ENCODE measurements at regions of chr5 and their contacts with region 1.

Region 1: DNA sequence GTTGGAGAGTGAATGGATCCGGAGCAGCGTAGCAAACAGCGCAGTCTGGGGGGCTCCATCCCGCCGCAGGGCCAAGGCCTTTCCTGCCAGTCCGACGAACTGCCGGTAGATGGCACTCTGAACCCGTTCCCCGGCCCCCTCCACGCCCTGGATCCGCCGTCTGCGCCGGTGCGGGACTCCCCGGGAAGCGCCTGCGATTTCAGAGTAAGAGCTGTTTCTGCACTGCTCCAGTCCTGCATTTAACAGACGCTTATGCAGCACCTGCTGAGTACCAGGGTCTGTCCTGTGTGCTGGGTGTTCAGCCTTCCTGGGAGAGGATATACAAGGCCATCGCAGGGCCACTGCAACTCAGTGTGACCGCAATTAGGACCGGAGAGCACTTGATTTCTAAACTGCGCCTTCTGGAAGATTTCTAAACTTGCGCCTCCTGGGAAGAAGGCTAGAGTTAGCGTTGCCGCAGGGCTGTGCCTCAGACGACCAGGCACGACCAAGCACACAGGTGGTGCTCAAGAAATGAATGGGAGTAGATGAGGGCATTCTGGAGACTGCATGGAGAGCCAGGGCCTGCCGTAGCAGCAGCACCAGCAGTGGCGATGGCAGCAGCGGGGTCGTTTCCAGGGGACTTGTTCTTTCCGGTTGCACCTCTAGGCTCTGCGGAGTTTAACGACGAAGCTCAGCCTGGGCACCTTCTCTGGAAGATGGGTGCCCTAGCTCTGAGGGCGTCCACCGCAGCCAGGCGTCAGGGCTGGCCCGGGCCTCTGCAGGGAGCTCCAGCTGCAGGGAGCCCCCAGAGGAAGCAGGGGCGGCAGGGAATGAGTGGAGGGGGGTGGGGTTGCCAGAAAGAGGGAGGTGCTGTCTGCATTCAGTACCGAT is 14.3 kb upstream of the TIFAB start:
- DNase-seq: peak; percentile 81
- ATAC-seq: peak; percentile 89
- H3K4me3 Mint-ChIP-seq: peak overlapping the region; percentile 39
- H3K27ac Mint-ChIP-seq: no peak overlapping the region
- H3K4me1 Mint-ChIP-seq: peaks cover 9% of the 10 kb centered on the region
- H3K27me3 Mint-ChIP-seq: peaks cover 32% of the 10 kb centered on the region
- CTCF ChIP-seq: peak; percentile 86

Region 2: GRCh38 chr5:135448791-135449507 is 17.5 kb before region 1 on chr5:
- CTCF ChIA-PET with region 1: interaction called, 42 read pairs
- POLR2A ChIA-PET with region 1: no interaction called
- intact Hi-C with region 1: no loop called
- DNase-seq: no peak
- ATAC-seq: no peak
- H3K4me3 Mint-ChIP-seq: no peak overlapping the region
- H3K27ac Mint-ChIP-seq: no peak overlapping the region
- H3K4me1 Mint-ChIP-seq: no peaks in the 10 kb centered on the region
- H3K27me3 Mint-ChIP-seq: no peaks in the 10 kb centered on the region
- CTCF ChIP-seq: no peak

Region 3: GRCh38 chr5:135488727-135489465 is 22.5 kb after region 1 on chr5:
- CTCF ChIA-PET with region 1: interaction called, 21 read pairs
- POLR2A ChIA-PET with region 1: no interaction called
- intact Hi-C with region 1: no loop called
- DNase-seq: no peak
- ATAC-seq: no peak
- H3K4me3 Mint-ChIP-seq: no peak overlapping the region
- H3K27ac Mint-ChIP-seq: no peak overlapping the region
- H3K4me1 Mint-ChIP-seq: peaks cover 7% of the 10 kb centered on the region
- H3K27me3 Mint-ChIP-seq: peaks cover 61% of the 10 kb centered on the region
- CTCF ChIP-seq: no peak

Region 4: DNA sequence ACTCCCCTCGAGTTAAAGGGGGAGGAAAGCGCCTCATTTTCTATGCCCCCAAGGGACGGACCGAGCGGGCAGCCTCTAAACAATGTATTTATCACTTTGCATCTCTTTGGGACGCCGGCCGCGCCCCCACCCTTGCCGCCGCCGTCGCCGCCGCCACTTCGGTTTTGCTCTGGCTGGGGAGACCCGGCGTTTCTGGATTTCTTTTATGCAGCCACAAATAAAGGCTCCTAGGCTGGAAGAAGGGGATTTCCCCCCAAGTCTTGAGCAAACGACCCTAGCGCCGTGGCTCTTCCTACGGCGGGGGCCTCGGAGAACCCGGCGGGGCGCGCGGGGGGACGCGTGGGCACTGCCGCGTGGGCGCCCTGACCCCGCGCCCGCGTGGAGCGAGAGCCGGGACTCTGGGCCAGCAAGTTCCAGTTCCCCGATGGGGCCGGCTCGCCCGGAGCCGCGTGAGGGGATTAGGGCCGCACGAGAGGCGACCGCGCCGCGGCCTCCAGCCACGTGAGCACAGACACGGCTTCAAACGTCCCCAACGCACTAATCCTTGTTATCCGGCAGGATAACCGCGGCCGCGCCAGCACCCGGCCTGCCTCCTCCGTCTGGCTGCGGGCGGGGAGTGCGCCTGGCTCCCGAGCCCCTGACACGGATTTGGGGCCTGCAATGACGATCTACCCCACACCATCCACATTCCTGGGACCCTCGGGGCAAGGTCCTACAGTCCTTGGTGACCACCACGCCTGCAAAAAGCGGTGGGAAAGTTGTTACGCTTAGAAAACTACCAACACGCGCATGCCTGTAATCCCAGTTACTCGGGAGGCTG is 77.3 kb after region 1 on chr5:
- CTCF ChIA-PET with region 1: interaction called, 430 read pairs
- POLR2A ChIA-PET with region 1: no interaction called
- intact Hi-C with region 1: no loop called
- DNase-seq: no peak
- ATAC-seq: no peak
- H3K4me3 Mint-ChIP-seq: peak overlapping the region; percentile 71
- H3K27ac Mint-ChIP-seq: no peak overlapping the region
- H3K4me1 Mint-ChIP-seq: peaks cover 16% of the 10 kb centered on the region
- H3K27me3 Mint-ChIP-seq: peaks cover 70% of the 10 kb centered on the region
- CTCF ChIP-seq: no peak

Region 5: DNA sequence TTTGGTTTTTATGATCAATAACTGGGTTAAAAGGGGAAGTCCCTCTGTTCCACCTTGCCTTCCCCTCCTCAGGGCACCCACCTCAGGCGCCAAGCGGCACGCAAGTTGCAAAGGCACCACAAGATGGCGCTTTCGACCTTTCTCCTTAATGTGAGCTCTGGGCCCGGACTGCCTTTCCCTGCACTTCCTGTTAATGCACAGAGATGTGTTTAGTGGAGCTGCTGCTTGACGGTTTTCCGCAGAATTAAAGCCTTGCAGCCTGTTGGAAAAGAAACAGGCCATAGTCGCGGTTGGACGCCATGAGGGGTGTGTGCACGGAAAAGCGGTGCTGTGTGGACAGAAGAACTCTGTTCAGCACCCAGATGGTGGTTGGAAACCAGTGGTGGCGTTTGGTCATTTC is 94.4 kb after region 1 on chr5:
- CTCF ChIA-PET with region 1: interaction called, 430 read pairs
- POLR2A ChIA-PET with region 1: interaction called, 3 read pairs
- intact Hi-C with region 1: no loop called
- DNase-seq: peak; percentile 89
- ATAC-seq: peak; percentile 96
- H3K4me3 Mint-ChIP-seq: no peak overlapping the region
- H3K27ac Mint-ChIP-seq: no peak overlapping the region
- H3K4me1 Mint-ChIP-seq: peaks cover 3% of the 10 kb centered on the region
- H3K27me3 Mint-ChIP-seq: peaks cover 27% of the 10 kb centered on the region
- CTCF ChIP-seq: peak; percentile 70